Right ventricle myocardium inferior (tissue), 1 donor: ENCODE measurements at regions of chr2 and their contacts with region 1.

Region 1: GRCh38 chr2:175048275-175048674 is 43.1 kb upstream of the CHN1 start:
- DNase-seq: no peak
- ATAC-seq: no peak

Region 2: GRCh38 chr2:175062787-175063585 is 14.7 kb after region 1 on chr2:
- intact Hi-C with region 1: loop called (anchors 1 kb)
- DNase-seq: no peak
- ATAC-seq: no peak